Activated T-helper 2 cell treated with anti-CD3 and anti-CD28 coated beads, Interferon-gamma antibody, Interleukin-2, Interleukin-4, amounts not matched to agents 10 μg/mL and 5 μg/mL and 100 μg/mL, durations not matched to agents 14 hours and 24 hours and 36 hours (primary cell): ENCODE measurements at regions of chr1 and their contacts with region 1.

Region 1: GRCh38 chr1:51878616-51879336 is at the start of gene NRDC:
- DNase-seq: peak; percentile 99
- H3K4me3 Mint-ChIP-seq: no peak within 1 kb of the TSS
- H3K27ac Mint-ChIP-seq: no peak within 1 kb of the TSS
- H3K4me1 Mint-ChIP-seq: peaks cover 32% of the 10 kb centered on the region
- H3K27me3 Mint-ChIP-seq: peaks cover 10% of the 10 kb centered on the region
- total RNA-seq, gene NRDC: 177 and 182 TPM in 2 replicates

Region 2: DNA sequence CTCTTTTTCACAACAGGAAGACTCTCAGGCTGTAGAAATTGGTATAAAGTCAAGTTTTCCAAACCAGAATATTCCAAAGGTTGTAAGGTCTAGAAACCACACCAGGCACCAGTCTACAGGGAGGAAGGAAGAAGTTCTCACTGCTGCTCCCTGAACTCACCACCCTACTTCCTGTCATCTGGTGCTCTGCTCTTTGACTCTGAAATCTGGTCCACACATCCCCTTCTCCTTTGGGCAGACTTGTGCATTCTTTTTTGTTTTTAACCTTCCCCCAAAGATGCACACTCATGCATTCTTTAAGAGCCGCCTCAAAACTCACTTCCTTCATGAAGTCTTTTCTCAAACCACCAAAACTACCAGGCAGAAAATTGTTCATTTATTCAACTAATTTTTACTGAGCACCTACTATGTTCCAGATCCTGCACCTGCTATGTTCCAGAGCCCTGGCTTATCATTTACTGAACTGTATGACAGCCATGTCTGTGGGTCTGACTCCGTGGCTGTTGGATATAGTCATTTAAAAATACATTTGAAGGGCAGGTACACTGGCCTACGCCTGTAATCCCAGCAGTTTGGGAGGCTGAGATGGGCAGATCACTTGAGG is 329.7 kb before region 1 on chr1:
- intact Hi-C with region 1: loop called (anchors 10 kb)
- DNase-seq: no peak
- H3K4me3 Mint-ChIP-seq: no peak overlapping the region
- H3K27ac Mint-ChIP-seq: no peak overlapping the region
- H3K4me1 Mint-ChIP-seq: peaks cover 15% of the 10 kb centered on the region
- H3K27me3 Mint-ChIP-seq: no peaks in the 10 kb centered on the region

Region 3: DNA sequence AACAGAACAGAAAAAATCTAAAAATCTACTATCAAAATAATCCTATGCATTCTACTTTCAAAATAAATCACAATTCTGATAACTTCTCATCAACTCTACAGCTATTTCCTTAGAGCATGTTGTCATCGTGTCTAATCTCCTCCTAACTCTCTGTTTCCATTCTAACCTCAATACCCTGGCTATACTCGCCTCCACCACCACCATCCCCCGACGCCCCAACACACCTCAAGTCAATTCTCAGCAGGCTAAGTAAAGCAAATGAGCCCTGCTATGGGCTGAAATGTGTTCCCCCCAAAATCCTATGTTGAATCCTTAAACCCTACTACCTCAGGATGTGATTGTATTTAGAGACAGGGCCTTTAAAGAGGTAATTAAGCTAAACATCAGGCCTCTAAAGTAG is 34.8 kb before region 1 on chr1:
- intact Hi-C with region 1: loop called (anchors 5 kb)
- DNase-seq: no peak
- H3K4me3 Mint-ChIP-seq: no peak overlapping the region
- H3K27ac Mint-ChIP-seq: peak overlapping the region; percentile 43
- H3K4me1 Mint-ChIP-seq: peaks cover 22% of the 10 kb centered on the region
- H3K27me3 Mint-ChIP-seq: no peaks in the 10 kb centered on the region

Region 4: DNA sequence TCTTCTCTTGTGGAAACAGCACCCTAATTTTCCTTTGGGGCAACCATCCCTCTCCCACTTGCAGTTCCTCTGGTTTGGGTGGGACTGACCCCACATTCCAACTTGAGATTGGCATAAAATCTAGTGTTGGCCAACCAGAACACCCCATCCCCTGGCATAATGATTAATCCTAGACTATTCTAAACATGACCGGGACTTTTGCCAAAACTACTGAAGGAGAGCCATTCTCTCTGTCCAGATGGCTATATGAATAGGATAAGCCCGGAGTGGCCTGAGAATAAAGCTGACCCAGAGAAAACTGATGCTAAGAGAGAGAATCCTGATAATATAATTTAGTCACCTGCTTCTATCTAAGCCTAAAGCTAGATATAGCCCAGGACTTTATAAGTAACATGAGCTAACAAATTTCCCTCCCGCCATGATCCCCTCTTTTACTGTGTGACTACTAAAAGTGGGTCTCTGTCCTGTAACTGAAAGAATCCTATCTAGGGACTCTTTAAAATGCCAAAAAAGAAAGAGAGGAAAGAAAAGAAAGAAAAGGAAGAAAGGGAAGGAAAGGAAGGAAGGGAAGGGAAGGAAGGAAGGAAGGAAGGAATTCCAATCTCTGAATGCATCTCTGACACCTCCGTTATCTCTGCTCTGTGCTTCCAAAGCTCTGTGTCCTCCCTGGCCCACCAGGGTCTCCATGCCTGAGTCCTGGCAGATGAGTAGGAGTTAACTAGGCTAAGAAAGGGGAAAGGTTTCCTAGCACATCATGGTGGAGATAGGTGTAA is 27.7 kb after region 1 on chr1:
- intact Hi-C with region 1: no loop called
- DNase-seq: no peak
- H3K4me3 Mint-ChIP-seq: no peak overlapping the region
- H3K27ac Mint-ChIP-seq: no peak overlapping the region
- H3K4me1 Mint-ChIP-seq: no peaks in the 10 kb centered on the region
- H3K27me3 Mint-ChIP-seq: peaks cover 18% of the 10 kb centered on the region